MCF 10A (cell line): ENCODE measurements at regions of chr16 and their contacts with region 1.

Region 1: DNA sequence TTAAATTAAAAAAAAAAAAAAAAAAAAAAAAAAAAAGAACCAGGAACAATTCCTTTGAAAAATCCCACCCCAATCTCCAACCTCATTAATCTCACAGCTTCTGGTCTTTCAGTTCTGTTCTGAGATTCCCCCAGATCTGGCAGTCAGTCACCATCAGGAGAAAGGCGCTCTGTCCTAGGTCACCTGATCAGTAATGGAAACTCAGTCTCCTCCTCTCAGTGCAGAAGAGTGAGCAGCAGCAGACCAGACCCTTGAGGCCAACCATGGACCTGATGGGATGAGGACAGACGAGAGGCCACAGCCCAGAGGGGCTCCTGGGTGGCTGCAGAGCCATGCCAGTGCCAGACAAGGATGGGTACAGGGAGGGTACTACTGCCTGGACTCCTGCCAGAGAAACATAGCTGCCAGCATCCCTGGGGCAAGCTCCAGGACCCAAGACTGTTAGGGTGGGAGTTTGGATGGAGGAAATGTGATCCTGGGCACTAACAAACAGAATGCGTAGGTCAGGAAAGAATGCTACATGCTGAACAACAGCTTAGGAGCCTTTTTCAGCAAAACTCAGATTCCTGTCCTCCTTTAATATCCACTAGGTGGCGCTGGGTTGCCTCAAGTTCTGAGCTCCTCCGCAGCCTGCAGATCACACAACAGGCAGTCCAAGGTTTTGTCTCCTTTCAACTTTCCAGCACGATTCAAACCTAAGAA is 28.7 kb downstream of the MPG start:
- DNase-seq: peak; percentile 73
- H3K4me3 Mint-ChIP-seq: no peak overlapping the region
- H3K27ac Mint-ChIP-seq: peak overlapping the region; percentile 36
- H3K4me1 Mint-ChIP-seq: no peaks in the 10 kb centered on the region
- H3K27me3 Mint-ChIP-seq: no peaks in the 10 kb centered on the region
- CTCF ChIP-seq: peak; percentile 78

Region 2: GRCh38 chr16:65671-66137 is 41.1 kb before region 1 on chr16:
- CTCF ChIA-PET with region 1: interaction called, 11 read pairs
- POLR2A ChIA-PET with region 1: interaction called, 3 read pairs
- intact Hi-C with region 1: no loop called
- DNase-seq: peak; percentile 76
- H3K4me3 Mint-ChIP-seq: no peak overlapping the region
- H3K27ac Mint-ChIP-seq: no peak overlapping the region
- H3K4me1 Mint-ChIP-seq: no peaks in the 10 kb centered on the region
- H3K27me3 Mint-ChIP-seq: no peaks in the 10 kb centered on the region
- CTCF ChIP-seq: peak; percentile 98

Region 3: GRCh38 chr16:91484-91883 is 15.3 kb before region 1 on chr16:
- CTCF ChIA-PET with region 1: interaction called, 65 read pairs
- POLR2A ChIA-PET with region 1: interaction called, 6 read pairs
- intact Hi-C with region 1: no loop called
- DNase-seq: no peak
- H3K4me3 Mint-ChIP-seq: no peak overlapping the region
- H3K27ac Mint-ChIP-seq: no peak overlapping the region
- H3K4me1 Mint-ChIP-seq: peaks cover 10% of the 10 kb centered on the region
- H3K27me3 Mint-ChIP-seq: no peaks in the 10 kb centered on the region
- CTCF ChIP-seq: no peak

Region 4: GRCh38 chr16:117379-118365 is 10.9 kb after region 1 on chr16:
- CTCF ChIA-PET with region 1: interaction called, 15 read pairs
- POLR2A ChIA-PET with region 1: interaction called, 3 read pairs
- intact Hi-C with region 1: no loop called
- DNase-seq: peak; percentile 69
- H3K4me3 Mint-ChIP-seq: no peak overlapping the region
- H3K27ac Mint-ChIP-seq: no peak overlapping the region
- H3K4me1 Mint-ChIP-seq: peaks cover 13% of the 10 kb centered on the region
- H3K27me3 Mint-ChIP-seq: no peaks in the 10 kb centered on the region
- CTCF ChIP-seq: peak; percentile 69

Region 5: GRCh38 chr16:180938-181667 is 74.3 kb after region 1 on chr16:
- CTCF ChIA-PET with region 1: interaction called, 27 read pairs
- POLR2A ChIA-PET with region 1: interaction called, 5 read pairs
- intact Hi-C with region 1: loop called (anchors 1 kb)
- DNase-seq: peak; percentile 65
- H3K4me3 Mint-ChIP-seq: no peak overlapping the region
- H3K27ac Mint-ChIP-seq: no peak overlapping the region
- H3K4me1 Mint-ChIP-seq: no peaks in the 10 kb centered on the region
- H3K27me3 Mint-ChIP-seq: peaks cover 11% of the 10 kb centered on the region
- CTCF ChIP-seq: peak; percentile 97

Region 6: GRCh38 chr16:200388-200787 is 93.6 kb after region 1 on chr16:
- CTCF ChIA-PET with region 1: no interaction called
- POLR2A ChIA-PET with region 1: no interaction called
- intact Hi-C with region 1: no loop called
- DNase-seq: peak; percentile 63
- H3K4me3 Mint-ChIP-seq: no peak overlapping the region
- H3K27ac Mint-ChIP-seq: no peak overlapping the region
- H3K4me1 Mint-ChIP-seq: no peaks in the 10 kb centered on the region
- H3K27me3 Mint-ChIP-seq: no peaks in the 10 kb centered on the region
- CTCF ChIP-seq: no peak

Region 7: DNA sequence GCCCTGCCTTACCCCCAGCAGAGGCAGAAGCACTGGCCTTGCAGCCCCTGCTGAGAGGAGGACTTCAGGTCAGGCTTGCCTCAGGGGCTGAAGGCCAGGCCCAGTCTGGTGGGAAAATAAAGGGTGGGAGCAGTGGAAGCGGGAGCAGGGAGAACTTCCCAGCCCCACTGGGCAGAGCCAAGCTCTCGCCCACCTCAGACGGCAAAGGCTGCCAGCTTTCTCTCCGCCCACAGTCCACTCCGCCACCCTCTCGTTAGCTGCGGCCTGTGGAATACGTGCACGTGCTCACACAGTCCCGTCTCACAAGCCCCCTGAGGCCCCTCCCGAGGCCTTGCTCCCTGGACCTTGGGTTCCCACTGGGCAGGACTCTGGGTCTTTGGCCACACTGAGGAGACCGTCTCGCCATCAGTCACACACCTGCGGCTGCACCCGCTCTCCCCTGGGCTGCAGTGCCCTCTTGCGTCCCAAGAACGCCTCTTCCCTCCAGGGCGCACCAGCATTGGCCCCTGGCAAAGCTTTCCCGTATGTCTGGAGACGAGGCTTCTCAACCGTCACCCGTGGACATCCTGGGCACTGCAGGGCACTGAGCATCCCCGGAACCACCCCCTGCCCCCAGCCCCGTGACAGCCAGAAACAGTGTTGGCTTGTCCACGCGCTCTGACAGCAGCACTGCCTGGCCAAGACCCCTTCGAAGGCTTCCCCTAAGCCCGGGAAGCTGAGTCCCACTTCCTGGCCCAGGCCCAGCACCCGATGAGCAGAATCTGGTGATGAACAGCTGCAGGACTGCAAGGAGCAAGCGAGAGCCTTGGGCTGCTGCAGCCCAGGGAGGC is 255.3 kb after region 1 on chr16:
- CTCF ChIA-PET with region 1: interaction called, 34 read pairs
- POLR2A ChIA-PET with region 1: interaction called, 6 read pairs
- intact Hi-C with region 1: loop called (anchors 1 kb)
- DNase-seq: peak; percentile 86
- H3K4me3 Mint-ChIP-seq: no peak overlapping the region
- H3K27ac Mint-ChIP-seq: no peak overlapping the region
- H3K4me1 Mint-ChIP-seq: no peaks in the 10 kb centered on the region
- H3K27me3 Mint-ChIP-seq: no peaks in the 10 kb centered on the region
- CTCF ChIP-seq: peak; percentile 92